ENCODE measurements at regions of chr9 and their contacts with region 1.

Region 1: GRCh38 chr9:21395778-21396717 is 10.8 kb upstream of the IFNA2 start:
- DNase-seq: peak; percentile 34 to 89 (median 49)
- ATAC-seq: peak; percentile 75
- H3K4me3 ChIP-seq: peak overlapping the region; percentile 27 to 36
- H3K27ac ChIP-seq: no peak overlapping the region
- H3K4me1 ChIP-seq: peaks cover 0 to 7% of the 10 kb centered on the region in 2 donors
- H3K27me3 ChIP-seq: peaks cover 34 to 83% of the 10 kb centered on the region in 2 donors
- CTCF ChIP-seq: peak; percentile 68

Region 2: GRCh38 chr9:21317956-21318923 is 77.8 kb before region 1 on chr9:
- intact Hi-C with region 1: loop called in 1 of 2 experiments (anchors 10 kb)
- DNase-seq: peak in 1 of 4 donors; percentile 52
- ATAC-seq: peak; percentile 85
- H3K4me3 ChIP-seq: no peak overlapping the region
- H3K27ac ChIP-seq: no peak overlapping the region
- H3K4me1 ChIP-seq: no peaks in the 10 kb centered on the region
- H3K27me3 ChIP-seq: no peaks in the 10 kb centered on the region
- CTCF ChIP-seq: peak; percentile 57 to 67

Measured in left lung (tissue), 14 donors.